SK-N-SH (cell line): ENCODE measurements at regions of chr11 and their contacts with region 1.

Region 1: GRCh38 chr11:112280268-112281126 is 19.8 kb upstream of the PLET1 start:
- DNase-seq: peak; percentile 85
- H3K4me3 ChIP-seq: peak overlapping the region; percentile 53 to 61
- H3K27ac ChIP-seq: peak overlapping the region in 1 of 2 experiments; percentile 53; a peak in 1 of 4 replicates
- H3K4me1 ChIP-seq: peaks cover 4 to 8% of the 10 kb centered on the region in 2 experiments; a peak in 3 of 4 replicates
- H3K27me3 ChIP-seq: no peaks in the 10 kb centered on the region
- CTCF ChIP-seq: peak; percentile 81
- EP300 ChIP-seq: no peak
- RAD21 ChIP-seq: peak; percentile 93

Region 2: GRCh38 chr11:112174789-112175598 is 105.5 kb before region 1 on chr11 and contains the start of gene BCO2:
- CTCF ChIA-PET with region 1: interaction called, 10 read pairs
- POLR2A ChIA-PET with region 1: no interaction called
- DNase-seq: peak; percentile 79
- H3K4me3 ChIP-seq: peak within 1 kb of the TSS; percentile 45 to 50
- H3K27ac ChIP-seq: peak within 1 kb of the TSS; percentile 17 to 72; a peak in 3 of 4 replicates
- H3K4me1 ChIP-seq: peaks cover 6 to 10% of the 10 kb centered on the region in 2 experiments; a peak in 3 of 4 replicates
- H3K27me3 ChIP-seq: no peaks in the 10 kb centered on the region
- CTCF ChIP-seq: peak; percentile 99
- EP300 ChIP-seq: 0 out of 4 replicates have a peak, but pooled peaks of 1 of the 2 experiments have one; percentile 20
- RAD21 ChIP-seq: peak; percentile 76
- polyA plus RNA-seq, gene BCO2: 0.87 and 1.2 TPM in 2 replicates

Region 3: GRCh38 chr11:112186304-112186703 is 94.2 kb before region 1 on chr11:
- CTCF ChIA-PET with region 1: no interaction called
- POLR2A ChIA-PET with region 1: no interaction called
- DNase-seq: no peak
- H3K4me3 ChIP-seq: no peak overlapping the region
- H3K27ac ChIP-seq: no peak overlapping the region
- H3K4me1 ChIP-seq: no peaks in the 10 kb centered on the region; a peak in 1 of 4 replicates
- H3K27me3 ChIP-seq: no peaks in the 10 kb centered on the region
- CTCF ChIP-seq: no peak
- EP300 ChIP-seq: no peak
- RAD21 ChIP-seq: no peak

Region 4: DNA sequence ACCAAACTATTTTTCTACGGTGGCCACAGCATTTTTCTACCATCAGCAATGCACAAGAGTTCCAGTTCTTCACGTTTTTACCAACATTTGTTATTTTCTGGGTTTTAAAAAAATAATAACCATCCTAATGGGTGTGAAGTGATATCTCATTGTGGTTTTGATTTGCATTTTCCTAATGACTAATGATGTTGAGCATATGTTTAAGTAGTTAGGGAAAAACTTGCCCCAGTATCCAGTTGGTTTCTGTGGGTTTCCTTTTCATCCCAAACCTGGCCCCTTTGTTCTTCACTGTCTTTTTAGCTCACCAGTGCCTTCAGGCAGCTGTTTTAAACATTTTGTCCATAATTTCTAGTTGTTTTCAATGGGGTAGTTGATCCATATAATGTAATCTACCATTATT is 69.0 kb before region 1 on chr11:
- CTCF ChIA-PET with region 1: interaction called, 620 read pairs
- POLR2A ChIA-PET with region 1: no interaction called
- DNase-seq: no peak
- H3K4me3 ChIP-seq: no peak overlapping the region
- H3K27ac ChIP-seq: no peak overlapping the region
- H3K4me1 ChIP-seq: no peaks in the 10 kb centered on the region; a peak in 1 of 4 replicates
- H3K27me3 ChIP-seq: no peaks in the 10 kb centered on the region
- CTCF ChIP-seq: no peak
- EP300 ChIP-seq: no peak
- RAD21 ChIP-seq: no peak

Region 5: GRCh38 chr11:112241486-112241885 is 39.0 kb before region 1 on chr11:
- CTCF ChIA-PET with region 1: interaction called, 21 read pairs
- POLR2A ChIA-PET with region 1: no interaction called
- DNase-seq: no peak
- H3K4me3 ChIP-seq: no peak overlapping the region
- H3K27ac ChIP-seq: no peak overlapping the region
- H3K4me1 ChIP-seq: no peaks in the 10 kb centered on the region
- H3K27me3 ChIP-seq: no peaks in the 10 kb centered on the region
- CTCF ChIP-seq: no peak
- EP300 ChIP-seq: no peak
- RAD21 ChIP-seq: no peak

Region 6: DNA sequence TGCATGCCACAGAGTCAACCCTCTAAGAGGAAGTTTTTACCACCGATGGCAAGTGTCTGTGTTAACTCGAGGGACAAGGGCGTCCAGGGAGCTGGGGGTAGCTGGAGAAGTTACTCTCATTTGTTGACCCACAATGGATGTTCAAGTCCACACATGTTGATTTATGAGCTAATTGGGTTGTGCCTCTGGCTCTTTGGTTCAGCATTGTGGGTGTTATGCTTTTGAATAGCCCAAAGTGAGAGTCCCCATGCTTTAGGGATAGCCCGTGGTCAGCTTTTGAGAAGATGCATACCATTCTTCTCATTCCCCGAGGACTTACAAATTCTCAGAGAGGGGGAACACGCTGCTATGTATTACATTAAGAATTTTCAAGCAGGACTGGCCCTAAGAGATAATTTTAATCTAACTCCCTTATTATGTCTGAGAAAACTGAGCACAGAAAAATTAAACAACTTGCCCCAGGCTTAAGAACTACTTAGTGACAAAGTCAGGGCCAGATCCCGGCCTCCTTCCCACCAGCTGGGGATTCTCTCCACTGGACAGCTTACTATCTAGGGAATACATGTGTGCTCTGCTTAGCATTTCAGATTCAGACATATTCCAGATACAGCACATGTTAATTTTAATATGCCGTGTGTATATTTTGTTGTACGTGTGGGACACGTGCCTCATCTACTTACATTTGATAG is 14.6 kb before region 1 on chr11:
- CTCF ChIA-PET with region 1: interaction called, 37 read pairs
- POLR2A ChIA-PET with region 1: no interaction called
- DNase-seq: peak; percentile 80
- H3K4me3 ChIP-seq: no peak overlapping the region
- H3K27ac ChIP-seq: peak overlapping the region in 1 of 2 experiments; percentile 92; a peak in 2 of 4 replicates
- H3K4me1 ChIP-seq: peaks cover 0 to 21% of the 10 kb centered on the region in 2 experiments; a peak in 2 of 4 replicates
- H3K27me3 ChIP-seq: no peaks in the 10 kb centered on the region
- CTCF ChIP-seq: no peak
- EP300 ChIP-seq: peak in 1 of 2 experiments; percentile 94; a peak in 2 of 4 replicates
- RAD21 ChIP-seq: no peak

Region 7: DNA sequence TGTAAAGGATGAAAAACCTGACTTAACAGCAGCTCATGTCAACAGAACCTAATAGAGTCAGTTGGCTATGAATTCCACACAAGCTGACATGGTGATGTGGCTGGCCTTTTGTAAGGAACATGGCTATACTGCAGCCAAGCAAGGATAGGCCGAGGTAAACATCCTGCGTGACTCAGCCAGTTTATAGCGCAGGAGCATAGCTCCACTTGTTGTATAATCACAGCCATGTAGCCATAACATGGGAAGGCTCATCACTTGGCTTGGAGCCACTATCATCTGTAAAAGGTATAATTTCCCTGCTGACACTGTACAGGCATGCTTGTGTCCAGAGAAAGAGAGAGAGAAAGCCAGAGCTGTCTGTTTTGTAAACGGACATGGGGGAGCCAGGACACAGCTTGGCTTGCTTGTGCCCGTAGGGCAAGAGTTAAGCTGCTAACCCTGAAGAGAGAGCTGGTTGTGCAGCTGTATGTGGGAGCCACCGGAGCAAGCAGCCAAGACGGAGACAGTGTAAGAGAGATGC is 84.5 kb after region 1 on chr11:
- CTCF ChIA-PET with region 1: no interaction called
- POLR2A ChIA-PET with region 1: no interaction called
- DNase-seq: peak; percentile 49
- H3K4me3 ChIP-seq: no peak overlapping the region
- H3K27ac ChIP-seq: peak overlapping the region in 1 of 2 experiments; percentile 62; a peak in 2 of 4 replicates
- H3K4me1 ChIP-seq: peaks cover 0 to 24% of the 10 kb centered on the region in 2 experiments; a peak in 1 of 4 replicates
- H3K27me3 ChIP-seq: no peaks in the 10 kb centered on the region
- CTCF ChIP-seq: no peak
- EP300 ChIP-seq: peak in 1 of 2 experiments; percentile 77; a peak in 1 of 4 replicates
- RAD21 ChIP-seq: peak; percentile 18; the same call in 1 of the 2 replicates

Region 8: DNA sequence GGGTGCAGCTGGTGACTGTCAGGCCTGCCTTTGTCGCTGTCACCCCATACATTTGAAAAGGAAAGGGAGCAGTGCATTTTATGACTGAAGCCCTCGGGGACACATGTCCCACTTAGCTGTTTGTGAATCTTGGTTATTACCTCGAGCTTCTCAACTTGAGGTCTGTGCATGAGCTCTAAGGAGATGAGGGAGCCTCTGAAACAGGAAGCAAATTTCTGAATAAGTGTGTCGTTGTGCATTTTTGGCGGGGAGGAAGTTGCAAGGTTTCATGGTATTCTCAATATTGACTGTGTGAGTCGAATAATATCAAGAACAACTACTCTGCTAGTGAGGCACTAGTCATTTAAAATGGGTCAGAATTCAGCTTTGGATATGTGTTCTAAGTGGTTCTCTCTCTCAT is 129.8 kb after region 1 on chr11:
- CTCF ChIA-PET with region 1: no interaction called
- POLR2A ChIA-PET with region 1: no interaction called
- DNase-seq: no peak
- H3K4me3 ChIP-seq: no peak overlapping the region
- H3K27ac ChIP-seq: no peak overlapping the region
- H3K4me1 ChIP-seq: no peaks in the 10 kb centered on the region
- H3K27me3 ChIP-seq: no peaks in the 10 kb centered on the region; the same call in 1 of the 2 replicates
- CTCF ChIP-seq: no peak
- EP300 ChIP-seq: no peak
- RAD21 ChIP-seq: no peak

Region 9: DNA sequence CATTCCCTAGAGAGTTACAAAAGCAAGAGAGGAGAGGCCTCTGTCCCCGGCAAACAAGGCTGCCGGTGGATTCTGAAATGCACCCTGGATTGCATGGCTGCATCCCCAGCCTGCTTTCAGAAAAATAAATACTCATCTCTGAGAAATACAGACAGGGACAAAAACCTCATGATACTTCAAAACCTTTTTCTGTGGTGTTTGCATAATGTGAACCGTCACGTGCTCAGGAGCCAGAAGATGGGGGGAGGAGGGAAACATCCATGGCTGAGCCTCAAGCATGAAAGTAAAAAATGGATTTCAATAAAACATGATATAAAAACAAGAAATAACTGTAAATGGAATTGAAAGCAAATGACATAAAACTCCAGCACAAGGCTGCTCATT is 482.2 kb after region 1 on chr11:
- CTCF ChIA-PET with region 1: no interaction called
- POLR2A ChIA-PET with region 1: no interaction called
- DNase-seq: no peak
- H3K4me3 ChIP-seq: no peak overlapping the region
- H3K27ac ChIP-seq: no peak overlapping the region
- H3K4me1 ChIP-seq: no peaks in the 10 kb centered on the region
- H3K27me3 ChIP-seq: no peaks in the 10 kb centered on the region
- CTCF ChIP-seq: no peak
- EP300 ChIP-seq: no peak
- RAD21 ChIP-seq: no peak